Aorta (tissue), 5 donors: ENCODE measurements at regions of chr3 and their contacts with region 1.

Region 1: GRCh38 chr3:11509173-11510000 is 134.3 kb downstream of the VGLL4 start:
- DNase-seq: peak; percentile 86 to 87
- ATAC-seq: peak; percentile 94
- H3K4me3 ChIP-seq: peak overlapping the region in 1 of 2 donors; percentile 13
- H3K27ac ChIP-seq: peak overlapping the region; percentile 62 to 98
- H3K4me1 ChIP-seq: peaks cover 9 to 11% of the 10 kb centered on the region in 2 donors
- H3K27me3 ChIP-seq: no peaks in the 10 kb centered on the region

Region 2: GRCh38 chr3:11465744-11466616 is 43.4 kb before region 1 on chr3:
- intact Hi-C with region 1: loop called (anchors 5 kb)
- DNase-seq: peak in 1 of 2 donors; percentile 68
- ATAC-seq: peak; percentile 93
- H3K4me3 ChIP-seq: no peak overlapping the region
- H3K27ac ChIP-seq: peak overlapping the region; percentile 86 to 92
- H3K4me1 ChIP-seq: peaks cover 0 to 4% of the 10 kb centered on the region in 2 donors
- H3K27me3 ChIP-seq: no peaks in the 10 kb centered on the region

Region 3: GRCh38 chr3:11556851-11557644 is 47.7 kb after region 1 on chr3:
- intact Hi-C with region 1: loop called (anchors 5 kb)
- DNase-seq: peak; percentile 74 to 76
- ATAC-seq: no peak
- H3K4me3 ChIP-seq: no peak overlapping the region
- H3K27ac ChIP-seq: no peak overlapping the region
- H3K4me1 ChIP-seq: no peaks in the 10 kb centered on the region
- H3K27me3 ChIP-seq: no peaks in the 10 kb centered on the region